Caco-2 (cell line): ENCODE measurements at regions of chr17 and their contacts with region 1.

Region 1: DNA sequence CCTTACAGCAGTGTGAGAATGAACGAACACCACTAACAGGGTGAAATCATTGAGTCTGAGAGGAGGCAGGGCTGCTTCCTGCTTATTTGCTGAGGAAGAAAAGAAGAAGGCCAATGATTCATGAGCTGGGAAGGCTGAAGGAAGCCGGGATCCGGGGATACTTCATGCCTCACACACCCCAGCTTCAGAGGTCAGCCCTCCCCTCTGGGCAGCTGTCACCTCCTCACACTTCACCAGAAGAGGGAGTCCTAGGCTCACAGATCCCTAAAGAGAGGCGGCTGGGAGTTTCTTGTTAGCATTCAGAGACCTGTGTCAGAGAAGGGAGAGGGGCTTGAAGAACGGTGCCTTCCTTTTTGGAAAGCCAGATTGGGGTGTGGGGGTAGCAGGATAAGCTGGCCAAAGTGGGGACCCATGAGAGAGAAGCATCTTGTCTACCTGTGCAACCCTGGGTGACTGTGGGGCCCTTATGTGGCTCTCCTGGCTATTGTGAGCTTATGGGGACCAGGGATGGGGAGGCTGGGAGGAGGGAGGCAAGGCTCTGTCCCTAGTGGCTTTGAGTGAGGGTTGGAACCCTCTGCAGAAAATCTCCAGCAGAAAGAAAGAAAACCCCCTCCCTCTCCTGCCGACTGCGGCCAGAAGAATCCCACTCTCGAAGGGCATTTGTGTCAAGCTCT is 94.6 kb downstream of the RGS9 start:
- DNase-seq: peak; percentile 65 to 77
- H3K4me3 ChIP-seq: no peak overlapping the region
- H3K4me3 Mint-ChIP-seq: no peak overlapping the region
- H3K27ac Mint-ChIP-seq: no peak overlapping the region
- H3K4me1 ChIP-seq: peaks cover 15% of the 10 kb centered on the region
- H3K4me1 Mint-ChIP-seq: peaks cover 27% of the 10 kb centered on the region
- H3K27me3 ChIP-seq: no peaks in the 10 kb centered on the region
- H3K27me3 Mint-ChIP-seq: peaks cover 1% of the 10 kb centered on the region
- CTCF ChIP-seq: peak; percentile 76 to 88

Region 2: GRCh38 chr17:65278050-65278819 is 46.4 kb after region 1 on chr17:
- CTCF ChIA-PET with region 1: interaction called, 3 read pairs
- POLR2A ChIA-PET with region 1: no interaction called
- intact Hi-C with region 1: loop called (anchors 5 kb)
- DNase-seq: peak; percentile 81 to 82
- H3K4me3 ChIP-seq: no peak overlapping the region
- H3K4me3 Mint-ChIP-seq: peak overlapping the region; percentile 39
- H3K27ac Mint-ChIP-seq: no peak overlapping the region
- H3K4me1 ChIP-seq: peaks cover 14% of the 10 kb centered on the region; the same call in 1 of the 2 replicates
- H3K4me1 Mint-ChIP-seq: peaks cover 9% of the 10 kb centered on the region
- H3K27me3 ChIP-seq: no peaks in the 10 kb centered on the region
- H3K27me3 Mint-ChIP-seq: peaks cover 4% of the 10 kb centered on the region
- CTCF ChIP-seq: peak; percentile 82 to 89